GM12878 (cell line): ENCODE measurements at regions of chr7 and their contacts with region 1.

Region 1: DNA sequence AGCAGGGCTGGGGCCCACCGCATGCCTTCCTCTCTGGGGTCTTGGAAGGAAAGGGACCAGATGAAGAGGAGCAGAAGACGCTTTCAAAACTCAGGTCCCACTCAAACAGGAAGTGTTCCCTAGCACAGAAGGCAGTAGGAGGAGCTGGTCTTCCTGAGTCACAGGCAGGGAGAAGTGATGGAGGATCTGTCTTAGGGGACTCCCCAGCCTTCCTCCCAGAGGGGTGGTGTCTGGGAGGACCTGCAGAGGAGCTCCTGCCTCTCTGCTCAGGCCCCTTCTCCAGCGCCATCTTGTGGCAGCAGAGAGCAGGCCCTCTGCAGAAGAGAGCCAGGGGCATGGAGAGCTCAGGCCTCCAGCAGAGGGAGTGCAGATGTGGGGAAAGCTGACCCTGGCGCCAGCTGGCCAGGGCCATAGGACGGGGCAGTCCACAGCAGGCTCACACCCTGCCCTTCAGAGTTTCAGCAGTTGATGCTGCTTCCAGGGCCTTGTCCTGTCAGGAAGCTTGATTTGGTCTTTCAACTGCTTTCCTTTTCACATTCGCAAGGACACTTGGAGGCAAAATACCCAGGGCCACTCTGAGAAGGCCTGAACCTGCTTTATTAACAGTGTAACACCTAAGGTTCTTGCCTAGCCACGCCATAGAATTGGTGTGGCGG is 62.2 kb upstream of the TARP start:
- DNase-seq: peak; percentile 82
- ATAC-seq: peak; percentile 97
- H3K4me3 ChIP-seq: peak overlapping the region; percentile 45; the same call in 1 of the 2 replicates
- H3K27ac ChIP-seq: no peak overlapping the region
- H3K4me1 ChIP-seq: no peaks in the 10 kb centered on the region; the same call in 1 of the 2 replicates
- H3K27me3 ChIP-seq: no peaks in the 10 kb centered on the region
- CTCF ChIP-seq: peak; percentile 99 to 100 (median 100)
- EP300 ChIP-seq: no peak
- POLR2A ChIP-seq: no peak
- RAD21 ChIP-seq: peak; percentile 84

Region 2: GRCh38 chr7:37908221-37908788 is 427.3 kb before region 1 on chr7:
- CTCF ChIA-PET with region 1: interaction called, 34 read pairs
- POLR2A ChIA-PET with region 1: no interaction called
- RAD21 ChIA-PET with region 1: interaction called, 3 read pairs
- SMC1A ChIA-PET with region 1: interaction called, 5 read pairs
- in situ Hi-C with region 1: loop called (anchors 5 kb)
- intact Hi-C with region 1: no loop called
- DNase-seq: no peak
- ATAC-seq: no peak
- H3K4me3 ChIP-seq: no peak overlapping the region
- H3K27ac ChIP-seq: no peak overlapping the region
- H3K4me1 ChIP-seq: no peaks in the 10 kb centered on the region
- H3K27me3 ChIP-seq: peaks cover under 1 to 2% of the 10 kb centered on the region in 2 experiments; a peak in 1 of 4 replicates
- CTCF ChIP-seq: no peak
- EP300 ChIP-seq: no peak
- POLR2A ChIP-seq: no peak
- RAD21 ChIP-seq: no peak

Region 3: GRCh38 chr7:38178004-38178694 is 157.5 kb before region 1 on chr7 and contains the start of gene STARD3NL:
- CTCF ChIA-PET with region 1: interaction called, 16 read pairs
- POLR2A ChIA-PET with region 1: no interaction called
- RAD21 ChIA-PET with region 1: interaction called, 6 read pairs
- SMC1A ChIA-PET with region 1: interaction called, 6 read pairs
- in situ Hi-C with region 1: no loop called
- intact Hi-C with region 1: no loop called
- DNase-seq: peak; percentile 100
- ATAC-seq: peak; percentile 94
- H3K4me3 ChIP-seq: peak within 1 kb of the TSS; percentile 91
- H3K27ac ChIP-seq: peak within 1 kb of the TSS; percentile 90
- H3K4me1 ChIP-seq: no peaks in the 10 kb centered on the region
- H3K27me3 ChIP-seq: no peaks in the 10 kb centered on the region
- CTCF ChIP-seq: no peak
- EP300 ChIP-seq: no peak
- POLR2A ChIP-seq: peak; percentile 78
- RAD21 ChIP-seq: no peak
- polyA plus RNA-seq, gene STARD3NL: 76.4 to 101 TPM

Region 4: GRCh38 chr7:38222481-38223096 is 113.0 kb before region 1 on chr7:
- CTCF ChIA-PET with region 1: interaction called, 240 read pairs
- POLR2A ChIA-PET with region 1: no interaction called
- RAD21 ChIA-PET with region 1: interaction called, 22 read pairs
- SMC1A ChIA-PET with region 1: interaction called, 58 read pairs
- in situ Hi-C with region 1: loop called (anchors 25 kb)
- intact Hi-C with region 1: no loop called
- DNase-seq: peak; percentile 34
- ATAC-seq: peak; percentile 87
- H3K4me3 ChIP-seq: no peak overlapping the region
- H3K27ac ChIP-seq: no peak overlapping the region
- H3K4me1 ChIP-seq: no peaks in the 10 kb centered on the region
- H3K27me3 ChIP-seq: no peaks in the 10 kb centered on the region
- CTCF ChIP-seq: peak; percentile 72 to 79 (median 79)
- EP300 ChIP-seq: no peak
- POLR2A ChIP-seq: no peak
- RAD21 ChIP-seq: peak; percentile 97

Region 5: GRCh38 chr7:38306171-38306570 is 29.4 kb before region 1 on chr7:
- CTCF ChIA-PET with region 1: interaction called, 9 read pairs
- POLR2A ChIA-PET with region 1: interaction called, 3 read pairs
- RAD21 ChIA-PET with region 1: interaction called, 7 read pairs
- SMC1A ChIA-PET with region 1: interaction called, 12 read pairs
- in situ Hi-C with region 1: no loop called
- intact Hi-C with region 1: no loop called
- DNase-seq: no peak
- ATAC-seq: no peak
- H3K4me3 ChIP-seq: no peak overlapping the region
- H3K27ac ChIP-seq: no peak overlapping the region
- H3K4me1 ChIP-seq: peaks cover 13% of the 10 kb centered on the region
- H3K27me3 ChIP-seq: no peaks in the 10 kb centered on the region
- CTCF ChIP-seq: no peak
- EP300 ChIP-seq: no peak
- POLR2A ChIP-seq: no peak
- RAD21 ChIP-seq: no peak

Region 6: GRCh38 chr7:38351601-38352000 is 16.0 kb after region 1 on chr7:
- CTCF ChIA-PET with region 1: interaction called, 240 read pairs
- POLR2A ChIA-PET with region 1: interaction called, 3 read pairs
- RAD21 ChIA-PET with region 1: interaction called, 39 read pairs
- SMC1A ChIA-PET with region 1: interaction called, 16 read pairs
- in situ Hi-C with region 1: no loop called
- intact Hi-C with region 1: no loop called
- DNase-seq: no peak
- ATAC-seq: no peak
- H3K4me3 ChIP-seq: peak overlapping the region; percentile 16; the same call in 1 of the 2 replicates
- H3K27ac ChIP-seq: no peak overlapping the region
- H3K4me1 ChIP-seq: no peaks in the 10 kb centered on the region
- H3K27me3 ChIP-seq: no peaks in the 10 kb centered on the region
- CTCF ChIP-seq: no peak
- EP300 ChIP-seq: no peak
- POLR2A ChIP-seq: no peak
- RAD21 ChIP-seq: no peak

Region 7: GRCh38 chr7:38375453-38375852 is 39.8 kb after region 1 on chr7:
- CTCF ChIA-PET with region 1: interaction called, 247 read pairs
- POLR2A ChIA-PET with region 1: no interaction called
- RAD21 ChIA-PET with region 1: interaction called, 47 read pairs
- SMC1A ChIA-PET with region 1: interaction called, 48 read pairs
- in situ Hi-C with region 1: no loop called
- intact Hi-C with region 1: loop called (anchors 5 kb)
- DNase-seq: no peak
- ATAC-seq: no peak
- H3K4me3 ChIP-seq: no peak overlapping the region
- H3K27ac ChIP-seq: no peak overlapping the region
- H3K4me1 ChIP-seq: no peaks in the 10 kb centered on the region
- H3K27me3 ChIP-seq: no peaks in the 10 kb centered on the region
- CTCF ChIP-seq: no peak
- EP300 ChIP-seq: no peak
- POLR2A ChIP-seq: no peak
- RAD21 ChIP-seq: no peak